ENCODE measurements at regions of chr2 and their contacts with region 1.

Region 1: GRCh38 chr2:113203901-113204519 is 30.2 kb downstream of the PSD4 start:
- DNase-seq: peak; percentile 64
- H3K4me3 ChIP-seq: no peak overlapping the region
- H3K27ac ChIP-seq: no peak overlapping the region
- H3K4me1 ChIP-seq: peaks cover 2% of the 10 kb centered on the region
- H3K27me3 ChIP-seq: no peaks in the 10 kb centered on the region
- CTCF ChIP-seq: peak; percentile 81 to 88
- POLR2A ChIP-seq: no peak

Region 2: DNA sequence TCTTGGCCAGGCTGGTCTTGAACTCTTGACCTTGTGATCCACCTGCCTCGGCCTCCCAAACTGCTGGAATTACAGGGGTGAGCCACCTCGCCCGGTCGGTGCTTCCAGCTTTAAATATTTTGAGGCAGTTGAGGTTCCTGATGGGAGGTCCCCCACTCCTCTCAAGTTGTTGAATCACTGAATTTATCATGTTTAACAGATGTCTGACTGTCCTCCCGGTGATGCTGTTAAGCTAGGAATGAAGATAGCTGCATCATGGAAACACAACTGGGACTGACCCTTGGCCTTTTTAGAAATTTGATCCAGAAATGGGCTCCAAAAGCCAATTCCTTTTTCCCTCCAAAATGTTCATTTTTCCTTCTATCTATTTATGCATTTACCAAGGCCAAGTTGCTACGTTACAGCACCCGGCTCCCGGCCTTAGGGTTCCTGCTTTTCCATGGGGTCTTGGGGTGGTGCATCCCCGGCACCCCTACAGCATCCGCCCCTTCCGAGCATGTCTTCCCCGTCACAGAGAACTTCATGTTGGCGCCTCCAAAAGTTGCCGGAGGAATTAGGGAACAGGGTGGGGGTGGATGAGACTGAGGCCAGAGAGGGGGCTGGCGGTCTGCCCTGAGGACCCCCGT is 30.8 kb after region 1 on chr2:
- CTCF ChIA-PET with region 1: interaction called, 53 read pairs
- POLR2A ChIA-PET with region 1: no interaction called
- dilution Hi-C with region 1: no loop called
- intact Hi-C with region 1: loop called (anchors 1 kb)
- DNase-seq: no peak
- H3K4me3 ChIP-seq: peak overlapping the region in 1 of 3 experiments; percentile 89
- H3K27ac ChIP-seq: no peak overlapping the region
- H3K4me1 ChIP-seq: peaks cover 2% of the 10 kb centered on the region
- H3K27me3 ChIP-seq: no peaks in the 10 kb centered on the region
- CTCF ChIP-seq: no peak
- POLR2A ChIP-seq: no peak

Region 3: DNA sequence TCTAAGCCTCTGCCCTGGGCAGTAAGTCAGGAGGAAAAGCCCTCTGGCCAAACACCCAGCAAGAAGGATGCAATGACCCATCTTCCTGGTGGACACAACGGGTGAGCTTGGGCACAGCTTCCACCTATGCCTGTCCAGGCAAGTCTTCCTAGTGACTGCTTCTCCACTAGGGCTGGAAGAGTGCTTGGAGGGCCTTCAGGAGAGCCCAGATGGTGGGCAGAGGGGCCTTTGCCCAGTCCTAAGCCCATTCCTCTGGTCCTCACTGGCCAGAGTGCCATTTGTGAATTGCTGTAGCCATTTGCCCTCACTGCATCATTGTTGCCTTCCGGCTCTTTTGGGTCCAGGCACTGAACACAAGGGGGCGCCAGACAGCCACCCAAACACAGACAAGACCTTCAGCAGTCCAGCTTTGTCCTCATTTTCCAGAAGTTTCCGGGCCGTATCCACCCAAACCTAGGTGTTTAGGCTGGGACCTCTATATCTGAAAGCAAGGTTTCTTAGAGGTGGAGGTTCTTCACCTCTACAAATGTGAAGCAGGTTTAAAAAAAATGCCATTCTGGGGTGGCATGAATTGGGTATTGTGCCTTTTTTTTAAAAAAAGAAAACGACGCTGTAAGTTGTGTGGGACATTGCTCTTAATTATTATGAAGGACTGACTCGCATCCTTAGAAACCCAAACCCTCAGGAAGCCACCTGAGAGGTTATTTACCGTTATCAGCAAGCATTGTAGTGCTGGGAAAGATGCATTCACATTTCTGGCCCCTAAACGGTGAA is 45.2 kb after region 1 on chr2:
- CTCF ChIA-PET with region 1: interaction called, 109 read pairs
- POLR2A ChIA-PET with region 1: no interaction called
- dilution Hi-C with region 1: no loop called
- intact Hi-C with region 1: loop called (anchors 1 kb)
- DNase-seq: peak; percentile 67
- H3K4me3 ChIP-seq: no peak overlapping the region
- H3K27ac ChIP-seq: no peak overlapping the region
- H3K4me1 ChIP-seq: no peaks in the 10 kb centered on the region
- H3K27me3 ChIP-seq: no peaks in the 10 kb centered on the region
- CTCF ChIP-seq: peak; percentile 90 to 91
- POLR2A ChIP-seq: no peak

Region 4: DNA sequence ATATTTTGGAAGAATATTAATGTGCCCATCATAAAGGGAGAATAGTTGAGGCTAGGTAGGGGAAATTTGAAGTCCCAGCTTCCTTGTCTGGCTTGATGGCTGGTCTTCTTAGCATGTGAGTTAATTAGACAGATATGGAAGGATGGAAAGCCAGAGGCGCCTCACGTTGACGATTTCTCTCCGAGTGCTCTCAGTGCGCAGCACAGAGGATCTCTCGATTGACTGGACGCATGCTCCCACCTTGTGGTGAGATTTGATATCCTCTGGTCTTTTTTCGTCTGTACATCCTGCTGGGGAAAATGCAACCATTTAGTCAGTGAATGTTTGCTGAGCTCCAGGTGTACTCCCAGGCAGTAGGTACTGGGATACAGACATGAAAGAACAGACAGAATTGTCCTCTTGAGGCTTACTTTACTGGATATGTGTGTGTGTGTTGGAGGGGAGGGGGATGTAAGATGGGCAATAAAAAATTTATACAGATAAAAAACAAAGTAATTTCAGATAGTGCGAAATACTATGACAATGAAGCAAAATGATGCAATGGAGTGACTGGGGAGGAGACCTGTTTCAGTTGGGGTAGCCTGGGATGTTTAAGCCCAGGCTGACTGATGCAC is 166.6 kb after region 1 on chr2:
- CTCF ChIA-PET with region 1: interaction called, 44 read pairs
- POLR2A ChIA-PET with region 1: no interaction called
- dilution Hi-C with region 1: no loop called
- intact Hi-C with region 1: loop called (anchors 1 kb)
- DNase-seq: peak; percentile 61
- H3K4me3 ChIP-seq: no peak overlapping the region
- H3K27ac ChIP-seq: no peak overlapping the region
- H3K4me1 ChIP-seq: no peaks in the 10 kb centered on the region
- H3K27me3 ChIP-seq: no peaks in the 10 kb centered on the region
- CTCF ChIP-seq: peak; percentile 44 to 50
- POLR2A ChIP-seq: no peak